Activated T-helper 1 cell treated with anti-CD3 and anti-CD28 coated beads, Interleukin-12 subunit alpha, Interleukin-12 subunit beta, Interleukin-2, Interleukin-4 antibody, amounts not matched to agents 30 ng/mL and 10 ng/mL and 1 ng/mL, durations not matched to agents 14 hours and 24 hours and 36 hours (primary cell): ENCODE measurements at regions of chr7 and their contacts with region 1.

Region 1: DNA sequence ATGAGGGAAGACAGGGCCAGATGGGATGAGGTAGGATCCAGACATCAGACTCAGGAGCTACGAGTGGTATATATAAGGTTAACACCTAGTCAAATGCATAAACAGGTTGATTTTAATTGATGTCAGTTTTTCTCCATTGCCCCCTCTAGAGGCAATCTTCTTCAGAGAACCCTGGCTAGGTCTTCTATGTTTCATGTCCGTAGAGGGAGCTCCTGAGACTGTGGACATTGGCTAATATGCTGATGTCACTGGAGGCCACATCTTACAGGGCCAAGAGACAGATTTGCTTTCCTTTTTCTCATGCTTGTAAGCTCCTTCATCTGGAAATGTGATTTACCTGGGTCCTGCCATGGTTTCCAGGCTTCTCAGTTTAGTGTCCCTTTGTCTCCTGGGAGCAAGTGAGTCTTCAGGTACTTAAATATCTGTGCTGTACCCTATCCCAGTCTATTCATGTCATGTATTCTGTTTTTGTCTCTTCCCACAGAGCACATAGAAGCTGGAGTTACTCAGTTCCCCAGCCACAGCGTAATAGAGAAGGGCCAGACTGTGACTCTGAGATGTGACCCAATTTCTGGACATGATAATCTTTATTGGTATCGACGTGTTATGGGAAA is 161.6 kb upstream of the PRSS1 start:
- DNase-seq: no peak
- H3K4me3 Mint-ChIP-seq: no peak overlapping the region
- H3K27ac Mint-ChIP-seq: no peak overlapping the region
- H3K4me1 Mint-ChIP-seq: peaks cover 9% of the 10 kb centered on the region
- H3K27me3 Mint-ChIP-seq: no peaks in the 10 kb centered on the region

Region 2: GRCh38 chr7:142405122-142405765 is 182.4 kb before region 1 on chr7:
- intact Hi-C with region 1: no loop called
- DNase-seq: no peak
- H3K4me3 Mint-ChIP-seq: no peak overlapping the region
- H3K27ac Mint-ChIP-seq: no peak overlapping the region
- H3K4me1 Mint-ChIP-seq: no peaks in the 10 kb centered on the region
- H3K27me3 Mint-ChIP-seq: peaks cover 7% of the 10 kb centered on the region

Region 3: DNA sequence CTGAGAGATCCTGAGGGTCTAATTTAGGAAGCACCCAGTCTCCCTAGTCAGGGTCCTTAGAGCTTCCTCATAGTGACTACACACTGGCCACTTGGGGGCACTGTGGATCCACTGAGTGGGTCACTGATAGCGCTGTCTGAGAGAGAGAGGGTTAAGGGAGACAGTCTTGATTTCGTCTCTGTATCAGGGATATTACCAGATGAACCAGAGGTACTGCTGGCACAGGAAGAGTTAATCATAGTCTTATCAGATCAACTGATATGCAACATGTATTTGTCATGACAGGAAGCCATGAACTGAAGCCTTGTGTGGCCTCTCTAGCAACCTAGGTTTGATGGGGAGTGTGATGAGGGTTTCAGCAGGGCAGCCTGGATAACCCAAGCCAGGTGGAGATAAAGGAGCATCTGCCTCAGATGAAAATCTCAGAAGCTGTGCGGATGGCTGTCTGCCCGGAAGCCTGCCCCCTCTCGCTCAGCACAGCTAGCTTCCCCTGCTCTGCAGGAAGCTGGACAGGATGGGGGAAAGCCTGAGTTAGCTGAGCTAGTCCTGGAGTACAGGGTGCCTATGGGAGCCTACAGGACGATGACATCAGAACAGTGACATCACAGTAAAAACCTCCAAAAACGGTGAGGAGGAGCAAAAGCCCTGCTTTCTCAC is 52.4 kb before region 1 on chr7:
- intact Hi-C with region 1: loop called (anchors 1 kb)
- DNase-seq: peak; percentile 58
- H3K4me3 Mint-ChIP-seq: peak overlapping the region; percentile 59
- H3K27ac Mint-ChIP-seq: peak overlapping the region; percentile 62
- H3K4me1 Mint-ChIP-seq: peaks cover 29% of the 10 kb centered on the region
- H3K27me3 Mint-ChIP-seq: no peaks in the 10 kb centered on the region

Region 4: DNA sequence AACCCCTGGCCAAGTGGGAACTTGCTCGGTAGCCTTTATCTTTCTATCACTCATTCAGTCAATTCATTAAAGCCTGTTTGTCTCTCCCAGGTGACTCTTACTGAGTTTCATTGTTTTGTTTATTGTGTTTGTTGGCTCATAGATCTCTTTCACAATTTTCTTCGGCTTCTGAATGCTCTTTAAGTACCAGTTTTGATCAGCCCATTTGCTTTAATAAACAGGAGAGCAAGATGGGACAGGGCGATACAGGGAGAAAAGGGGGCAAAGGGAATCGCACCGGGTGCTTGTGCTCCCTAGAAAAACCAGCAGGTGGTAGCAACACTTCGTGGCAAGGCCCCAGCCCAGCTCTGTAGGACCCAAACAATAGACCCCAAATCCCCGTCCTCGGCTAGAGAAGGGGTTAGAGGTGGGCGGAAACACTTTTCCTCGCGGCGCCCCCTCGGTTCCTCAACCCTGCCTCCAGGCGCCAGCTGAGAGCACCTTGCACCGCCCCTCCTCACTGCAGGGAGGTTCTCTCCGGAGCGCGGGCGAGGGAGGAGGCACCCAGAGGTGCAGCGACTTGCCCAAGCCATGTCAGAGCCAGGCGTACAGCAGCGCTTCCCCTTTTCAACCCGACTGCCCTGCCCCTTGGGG is 266.2 kb after region 1 on chr7:
- intact Hi-C with region 1: no loop called
- DNase-seq: peak; percentile 50
- H3K4me3 Mint-ChIP-seq: peak overlapping the region; percentile 96
- H3K27ac Mint-ChIP-seq: peak overlapping the region; percentile 82
- H3K4me1 Mint-ChIP-seq: peaks cover 7% of the 10 kb centered on the region
- H3K27me3 Mint-ChIP-seq: peaks cover 25% of the 10 kb centered on the region